Left ventricle myocardium superior (tissue), 1 donor: ENCODE measurements at regions of chr16 and their contacts with region 1.

Region 1: GRCh38 chr16:57422026-57422944 is 17.7 kb downstream of the CCL17 start:
- DNase-seq: peak; percentile 53
- ATAC-seq: peak; percentile 54

Region 2: DNA sequence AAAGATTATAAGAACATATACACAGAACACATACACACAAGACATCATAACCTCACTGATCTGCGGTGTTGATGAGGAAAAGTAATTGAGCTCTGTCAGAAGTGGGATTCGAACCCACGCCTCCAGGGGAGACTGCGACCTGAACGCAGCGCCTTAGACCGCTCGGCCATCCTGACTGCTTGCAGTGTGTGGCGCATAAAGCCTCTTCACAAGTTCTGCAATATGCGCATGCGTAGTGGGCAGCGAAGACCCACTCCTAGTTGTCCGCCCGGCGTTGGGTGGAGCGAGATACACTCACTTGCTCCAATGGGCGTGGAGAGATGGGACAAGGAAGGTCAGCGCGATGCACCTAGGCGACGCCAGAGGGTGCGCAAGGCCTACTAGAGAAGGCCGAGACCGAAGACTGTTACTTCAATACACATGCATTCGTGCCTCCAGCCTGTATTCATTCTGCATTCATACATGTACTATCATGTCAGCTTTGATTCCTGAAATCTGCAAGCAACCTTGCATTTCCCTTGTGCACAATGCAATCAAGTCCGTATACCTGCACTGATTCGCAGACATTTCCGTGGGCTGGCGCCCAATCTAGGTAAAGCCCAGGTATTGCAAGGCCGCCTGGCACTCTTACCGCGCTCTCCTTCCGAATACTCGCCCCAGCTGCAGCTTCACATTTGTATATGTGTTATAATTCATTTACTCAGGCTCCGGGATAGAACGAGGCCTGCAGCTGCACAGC is 121.7 kb before region 1 on chr16:
- intact Hi-C with region 1: loop called (anchors 1 kb)
- DNase-seq: peak; percentile 99
- ATAC-seq: peak; percentile 93

Region 3: DNA sequence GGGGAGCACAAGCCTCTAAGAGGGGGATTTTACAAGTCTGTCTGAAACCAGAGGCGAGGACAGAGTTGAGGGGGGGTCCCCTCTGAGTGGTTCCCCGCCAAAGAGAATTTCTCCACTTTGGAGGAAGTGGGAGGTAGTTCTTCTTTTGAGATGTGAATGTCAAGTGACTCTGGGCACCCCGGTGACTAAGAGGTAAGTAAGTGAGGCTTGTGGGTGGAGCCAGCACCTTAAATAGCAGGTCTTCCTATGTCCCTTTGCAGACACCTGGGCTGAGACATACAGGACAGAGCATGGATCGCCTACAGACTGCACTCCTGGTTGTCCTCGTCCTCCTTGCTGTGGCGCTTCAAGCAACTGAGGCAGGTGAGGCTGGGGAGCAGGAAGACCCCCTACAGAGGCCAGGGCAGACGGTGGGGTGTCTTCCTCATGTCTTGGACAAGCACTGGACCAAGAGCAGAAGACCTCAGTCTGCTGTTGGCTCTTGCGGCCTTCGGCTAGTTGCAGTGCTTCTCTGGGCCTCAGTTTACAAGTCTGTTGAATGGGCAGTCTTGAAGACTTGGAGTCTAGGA is 63.7 kb before region 1 on chr16 and contains the start of gene CCL22:
- intact Hi-C with region 1: no loop called
- DNase-seq: no peak
- ATAC-seq: no peak
- total RNA-seq, gene CCL22: not detected